ENCODE measurements at regions of chr13 and their contacts with region 1.

Region 1: DNA sequence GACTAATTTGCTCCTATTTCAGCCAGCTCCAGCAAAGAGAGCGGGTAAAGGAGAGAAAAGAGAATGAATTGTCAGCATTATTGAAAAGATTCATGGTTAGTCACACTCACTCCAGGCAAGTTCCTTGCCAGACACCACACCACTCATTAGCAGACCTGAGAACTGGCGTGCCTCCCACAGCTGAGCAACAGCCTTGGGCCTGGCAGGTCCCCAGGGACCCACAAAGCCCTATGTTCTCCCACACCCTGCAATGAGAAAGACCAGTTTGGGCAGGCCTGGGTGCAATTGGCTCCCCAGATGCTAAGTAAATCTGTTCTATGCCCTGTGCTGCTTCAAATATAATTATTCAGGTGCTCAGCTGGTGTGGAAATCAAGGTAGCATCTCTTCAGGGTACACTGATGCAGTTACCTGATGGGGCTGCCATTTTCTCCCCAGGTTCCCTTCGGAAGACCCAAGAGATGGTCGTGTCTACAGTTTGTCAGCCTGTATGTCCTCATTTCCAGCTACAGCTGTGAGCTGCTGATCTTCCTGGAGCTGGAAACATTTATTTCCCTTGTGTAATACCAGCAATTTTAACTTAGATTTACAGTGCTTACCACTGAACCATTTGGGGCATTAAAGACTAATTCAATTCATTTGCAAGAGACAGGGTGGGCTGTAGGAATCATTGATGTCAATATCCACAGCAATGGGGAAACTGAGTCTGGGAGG is 405.0 kb downstream of the COG6 start:
- DNase-seq: peak; percentile 46 to 86
- H3K4me3 ChIP-seq: no peak overlapping the region
- H3K27ac ChIP-seq: no peak overlapping the region
- H3K4me1 ChIP-seq: peaks cover 0 to 14% of the 10 kb centered on the region in 2 donors
- H3K27me3 ChIP-seq: no peaks in the 10 kb centered on the region
- CTCF ChIP-seq: no peak

Region 2: GRCh38 chr13:40130871-40131636 is 70.6 kb after region 1 on chr13:
- intact Hi-C with region 1: loop called (anchors 5 kb)
- DNase-seq: peak in 1 of 2 donors; percentile 65
- H3K4me3 ChIP-seq: no peak overlapping the region
- H3K27ac ChIP-seq: no peak overlapping the region
- H3K4me1 ChIP-seq: peaks cover 0 to 14% of the 10 kb centered on the region in 2 donors
- H3K27me3 ChIP-seq: no peaks in the 10 kb centered on the region
- CTCF ChIP-seq: no peak